ENCODE measurements at regions of chr15 and their contacts with region 1.

Region 1: GRCh38 chr15:92808978-92809879 is 90.9 kb upstream of the CHD2 start:
- DNase-seq: peak; percentile 97
- ATAC-seq: peak; percentile 58
- H3K4me3 ChIP-seq: peak overlapping the region; percentile 68
- H3K27ac ChIP-seq: peak overlapping the region; percentile 94
- H3K4me1 ChIP-seq: peaks cover 59% of the 10 kb centered on the region
- H3K27me3 ChIP-seq: no peaks in the 10 kb centered on the region
- CTCF ChIP-seq: peak; percentile 84

Region 2: GRCh38 chr15:92681141-92681631 is 128.0 kb before region 1 on chr15:
- CTCF ChIA-PET with region 1: no interaction called
- POLR2A ChIA-PET with region 1: no interaction called
- intact Hi-C with region 1: no loop called
- DNase-seq: no peak
- ATAC-seq: no peak
- H3K4me3 ChIP-seq: no peak overlapping the region
- H3K27ac ChIP-seq: no peak overlapping the region
- H3K4me1 ChIP-seq: peaks cover 7% of the 10 kb centered on the region; the same call in 1 of the 2 replicates
- H3K27me3 ChIP-seq: no peaks in the 10 kb centered on the region
- CTCF ChIP-seq: no peak

Region 3: DNA sequence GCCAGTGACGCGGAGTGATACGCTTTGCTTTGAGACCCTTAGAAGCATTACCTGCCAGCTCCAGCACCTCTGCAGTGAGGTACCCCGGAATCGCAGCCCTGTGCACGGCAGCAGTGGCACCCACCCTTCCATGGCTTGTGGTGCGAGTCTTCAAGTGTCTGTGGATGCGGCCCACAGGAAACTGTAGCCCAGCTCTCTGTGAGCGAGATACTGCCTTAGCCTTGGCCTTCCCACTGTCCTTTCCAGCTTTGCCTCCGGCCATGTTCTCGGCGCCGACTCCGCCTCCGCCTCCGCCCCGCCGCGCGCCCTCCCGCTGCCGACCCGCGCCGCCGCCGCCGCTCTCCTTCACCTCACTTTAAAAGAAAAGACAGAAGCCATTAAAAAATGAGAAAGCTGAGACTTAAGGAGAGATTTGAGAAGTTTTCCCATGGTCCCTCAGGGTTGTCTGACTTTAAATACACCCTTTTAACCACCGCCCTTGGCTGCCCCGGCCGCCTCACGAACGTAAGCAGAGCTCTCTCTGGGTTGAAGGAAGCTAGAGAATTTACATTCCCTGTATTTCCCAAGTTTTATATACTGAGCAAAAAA is 75.2 kb before region 1 on chr15:
- CTCF ChIA-PET with region 1: no interaction called
- POLR2A ChIA-PET with region 1: no interaction called
- intact Hi-C with region 1: no loop called
- DNase-seq: no peak
- ATAC-seq: no peak
- H3K4me3 ChIP-seq: peak overlapping the region; percentile 32
- H3K27ac ChIP-seq: no peak overlapping the region
- H3K4me1 ChIP-seq: no peaks in the 10 kb centered on the region
- H3K27me3 ChIP-seq: no peaks in the 10 kb centered on the region
- CTCF ChIP-seq: no peak

Region 4: DNA sequence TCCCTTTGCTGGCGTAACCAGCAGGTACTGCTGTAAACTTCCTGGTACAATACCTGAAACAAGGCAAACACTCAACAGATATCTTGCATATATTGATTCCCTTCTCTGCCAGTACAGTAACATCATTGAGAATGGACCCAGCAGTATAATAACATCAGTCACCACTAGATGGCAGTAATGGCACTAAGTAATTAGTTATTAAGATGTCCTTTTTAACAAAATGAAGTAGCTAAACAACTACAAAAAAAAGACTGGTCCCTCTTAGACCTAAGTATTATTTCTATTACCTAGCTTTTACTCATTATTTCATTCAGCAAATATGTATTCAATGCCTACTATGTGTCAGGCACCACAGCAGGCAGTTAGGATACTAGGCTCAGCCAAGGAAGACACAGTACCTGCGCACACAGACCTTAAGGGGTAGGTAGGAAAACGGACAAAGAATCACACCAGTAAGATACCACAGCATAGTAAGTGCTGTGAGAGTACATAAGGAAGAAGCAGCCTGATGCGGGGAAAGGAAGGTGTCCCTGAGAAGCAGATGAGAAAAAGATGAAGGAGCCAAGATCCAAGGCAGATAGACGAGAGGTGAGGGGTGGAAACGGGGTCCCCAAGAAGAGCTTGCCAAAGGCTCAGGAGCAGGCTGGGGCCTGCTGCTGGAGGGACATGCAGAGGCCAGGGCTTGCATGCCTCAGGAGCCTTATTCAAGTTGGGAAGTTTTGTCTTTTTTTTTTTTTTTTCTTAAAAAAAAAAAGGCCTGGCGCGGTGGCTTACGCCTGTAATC is 11.9 kb before region 1 on chr15:
- CTCF ChIA-PET with region 1: interaction called, 4 read pairs
- POLR2A ChIA-PET with region 1: interaction called, 10 read pairs
- intact Hi-C with region 1: no loop called
- DNase-seq: peak; percentile 94
- ATAC-seq: peak; percentile 63
- H3K4me3 ChIP-seq: no peak overlapping the region
- H3K27ac ChIP-seq: peak overlapping the region; percentile 14; the same call in 1 of the 2 replicates
- H3K4me1 ChIP-seq: peaks cover 19% of the 10 kb centered on the region
- H3K27me3 ChIP-seq: no peaks in the 10 kb centered on the region
- CTCF ChIP-seq: peak; percentile 81

Region 5: DNA sequence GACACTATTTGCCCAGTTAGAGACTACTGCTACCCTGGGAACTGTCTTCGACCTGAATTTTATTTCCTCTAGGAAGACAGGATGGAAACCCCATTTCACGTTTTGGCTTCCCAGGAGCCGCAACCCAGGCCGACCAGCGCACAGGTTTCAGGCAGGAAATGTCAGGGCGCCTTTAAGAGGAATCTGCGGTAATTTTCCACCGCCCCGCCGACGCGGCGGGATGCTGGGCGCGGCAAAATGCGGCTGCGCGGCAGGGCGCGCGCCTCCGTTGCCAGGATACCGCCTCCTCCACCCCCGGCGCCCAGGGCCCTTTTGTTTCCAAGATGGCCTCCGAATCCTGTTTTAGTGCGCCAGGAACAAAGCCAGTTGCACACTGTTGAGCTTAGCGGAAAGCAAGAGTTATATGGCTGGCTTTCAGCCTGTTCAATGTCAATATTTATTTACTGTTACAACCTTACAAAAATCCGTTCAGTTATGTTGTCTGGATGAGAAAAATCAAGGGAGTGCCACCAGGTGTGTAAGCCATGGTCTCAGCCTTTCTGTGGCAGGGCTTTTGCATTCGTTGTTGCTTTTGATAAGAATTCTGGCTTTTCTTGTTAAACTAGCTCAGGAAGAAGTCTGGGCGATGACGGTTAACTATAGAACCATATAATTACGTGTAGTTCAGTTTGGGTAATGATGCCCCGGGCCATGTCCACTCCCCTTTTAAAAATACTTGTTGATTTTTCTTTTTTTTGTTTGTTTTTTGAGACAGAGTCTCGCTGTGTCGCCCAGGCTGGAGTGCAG is 11.2 kb after region 1 on chr15:
- CTCF ChIA-PET with region 1: no interaction called
- POLR2A ChIA-PET with region 1: interaction called, 3 read pairs
- intact Hi-C with region 1: loop called (anchors 1 kb)
- DNase-seq: peak; percentile 94
- ATAC-seq: peak; percentile 76
- H3K4me3 ChIP-seq: peak overlapping the region; percentile 62
- H3K27ac ChIP-seq: peak overlapping the region; percentile 96
- H3K4me1 ChIP-seq: peaks cover 43% of the 10 kb centered on the region
- H3K27me3 ChIP-seq: no peaks in the 10 kb centered on the region
- CTCF ChIP-seq: no peak

Region 6: GRCh38 chr15:92881802-92882696 is 72.8 kb after region 1 on chr15:
- CTCF ChIA-PET with region 1: interaction called, 4 read pairs
- POLR2A ChIA-PET with region 1: interaction called, 12 read pairs
- intact Hi-C with region 1: loop called (anchors 1 kb)
- DNase-seq: peak; percentile 99
- ATAC-seq: peak; percentile 93
- H3K4me3 ChIP-seq: peak overlapping the region; percentile 65
- H3K27ac ChIP-seq: peak overlapping the region; percentile 61
- H3K4me1 ChIP-seq: peaks cover 24% of the 10 kb centered on the region
- H3K27me3 ChIP-seq: no peaks in the 10 kb centered on the region
- CTCF ChIP-seq: no peak

Region 7: GRCh38 chr15:92899948-92900708 is 90.9 kb after region 1 on chr15 and contains the start of gene CHD2:
- CTCF ChIA-PET with region 1: interaction called, 7 read pairs
- POLR2A ChIA-PET with region 1: interaction called, 24 read pairs
- intact Hi-C with region 1: loop called (anchors 2 kb)
- DNase-seq: peak; percentile 86
- ATAC-seq: peak; percentile 66
- H3K4me3 ChIP-seq: peak within 1 kb of the TSS; percentile 95
- H3K27ac ChIP-seq: peak within 1 kb of the TSS; percentile 91
- H3K4me1 ChIP-seq: peaks cover 17% of the 10 kb centered on the region
- H3K27me3 ChIP-seq: no peaks in the 10 kb centered on the region
- CTCF ChIP-seq: no peak
- total RNA-seq, gene CHD2: 42.7 and 50.6 TPM in 2 replicates

Region 8: DNA sequence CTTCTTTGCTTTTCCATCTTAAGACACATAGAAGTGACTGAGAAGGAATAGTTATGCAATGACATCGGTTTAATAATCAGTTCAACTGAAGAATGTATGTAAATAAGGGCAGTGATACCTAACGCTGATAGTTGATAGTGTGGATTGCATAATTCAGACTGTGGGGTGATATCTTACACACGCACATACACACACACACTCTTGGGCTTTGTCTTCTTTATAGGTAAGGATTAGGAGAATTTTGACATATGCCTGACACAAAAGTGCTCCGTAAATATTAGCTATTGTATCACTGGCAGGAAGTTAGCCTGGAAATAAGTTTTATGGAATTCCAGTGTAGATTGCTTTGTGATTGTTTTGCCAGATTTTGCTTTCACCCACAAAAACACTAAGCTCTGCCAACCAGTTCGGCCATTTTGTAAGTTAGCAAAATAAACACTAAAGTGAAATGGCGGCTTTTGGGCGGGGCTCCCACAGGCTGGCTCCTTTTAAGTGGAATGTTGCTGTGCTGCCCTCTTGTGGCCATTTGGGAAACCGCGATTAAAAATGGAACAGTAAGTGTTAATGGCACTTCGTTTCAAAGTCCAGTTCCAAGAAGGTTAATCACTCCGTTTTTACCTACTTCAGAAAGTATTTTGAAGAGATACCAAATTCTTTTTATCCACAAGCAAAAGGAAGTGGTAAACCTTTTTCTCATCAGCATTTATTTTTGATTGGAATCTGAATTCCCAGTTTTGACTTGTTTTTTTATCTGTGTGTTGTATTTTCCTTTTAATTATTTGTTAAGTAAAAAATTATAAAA is 108.6 kb after region 1 on chr15:
- CTCF ChIA-PET with region 1: interaction called, 4 read pairs
- POLR2A ChIA-PET with region 1: no interaction called
- intact Hi-C with region 1: loop called (anchors 1 kb)
- DNase-seq: peak; percentile 96
- ATAC-seq: peak; percentile 23
- H3K4me3 ChIP-seq: peak overlapping the region; percentile 28; the same call in 1 of the 2 replicates
- H3K27ac ChIP-seq: peak overlapping the region; percentile 77
- H3K4me1 ChIP-seq: peaks cover 84% of the 10 kb centered on the region
- H3K27me3 ChIP-seq: no peaks in the 10 kb centered on the region
- CTCF ChIP-seq: peak; percentile 93